GM12878 (cell line): ENCODE measurements at regions of chr12 and their contacts with region 1.

Region 1: DNA sequence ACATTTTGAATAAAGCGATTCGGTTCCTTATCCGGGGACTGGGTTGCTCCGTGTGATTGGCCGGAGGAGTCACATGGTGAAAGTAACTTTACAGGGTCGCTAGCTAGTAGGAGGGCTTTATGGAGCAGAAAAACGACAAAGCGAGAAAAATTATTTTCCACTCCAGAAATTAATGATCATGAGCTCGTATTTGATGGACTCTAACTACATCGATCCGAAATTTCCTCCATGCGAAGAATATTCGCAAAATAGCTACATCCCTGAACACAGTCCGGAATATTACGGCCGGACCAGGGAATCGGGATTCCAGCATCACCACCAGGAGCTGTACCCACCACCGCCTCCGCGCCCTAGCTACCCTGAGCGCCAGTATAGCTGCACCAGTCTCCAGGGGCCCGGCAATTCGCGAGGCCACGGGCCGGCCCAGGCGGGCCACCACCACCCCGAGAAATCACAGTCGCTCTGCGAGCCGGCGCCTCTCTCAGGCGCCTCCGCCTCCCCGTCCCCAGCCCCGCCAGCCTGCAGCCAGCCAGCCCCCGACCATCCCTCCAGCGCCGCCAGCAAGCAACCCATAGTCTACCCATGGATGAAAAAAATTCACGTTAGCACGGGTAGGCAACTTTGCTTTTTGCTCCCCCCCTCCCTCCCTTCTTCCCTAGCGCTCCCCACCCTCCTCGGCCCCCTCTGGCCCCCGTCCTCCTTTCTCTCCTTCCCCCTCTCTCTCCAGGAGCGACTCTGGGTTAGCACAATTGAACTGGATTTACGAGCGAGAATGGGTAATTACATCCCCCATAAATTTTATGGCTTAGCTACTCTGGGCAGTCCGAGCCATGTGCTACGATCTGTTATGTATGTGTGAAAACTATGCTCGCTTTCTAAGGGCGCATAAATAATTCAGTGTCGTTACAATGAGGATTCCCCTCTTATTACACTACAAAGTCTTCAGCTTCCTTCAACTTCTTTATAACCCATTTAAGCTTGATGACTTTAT is at the start of gene HOXC4:
- DNase-seq: no peak
- ATAC-seq: peak; percentile 86
- H3K4me3 ChIP-seq: peak within 1 kb of the TSS; percentile 84
- H3K27ac ChIP-seq: peak within 1 kb of the TSS; percentile 89
- H3K4me1 ChIP-seq: peaks cover 22% of the 10 kb centered on the region
- H3K27me3 ChIP-seq: no peaks in the 10 kb centered on the region
- CTCF ChIP-seq: no peak
- EP300 ChIP-seq: no peak
- POLR2A ChIP-seq: no peak; the same call in 1 of the 2 replicates
- RAD21 ChIP-seq: no peak
- polyA plus RNA-seq, gene HOXC4: 1.0 to 1.8 TPM

Region 2: DNA sequence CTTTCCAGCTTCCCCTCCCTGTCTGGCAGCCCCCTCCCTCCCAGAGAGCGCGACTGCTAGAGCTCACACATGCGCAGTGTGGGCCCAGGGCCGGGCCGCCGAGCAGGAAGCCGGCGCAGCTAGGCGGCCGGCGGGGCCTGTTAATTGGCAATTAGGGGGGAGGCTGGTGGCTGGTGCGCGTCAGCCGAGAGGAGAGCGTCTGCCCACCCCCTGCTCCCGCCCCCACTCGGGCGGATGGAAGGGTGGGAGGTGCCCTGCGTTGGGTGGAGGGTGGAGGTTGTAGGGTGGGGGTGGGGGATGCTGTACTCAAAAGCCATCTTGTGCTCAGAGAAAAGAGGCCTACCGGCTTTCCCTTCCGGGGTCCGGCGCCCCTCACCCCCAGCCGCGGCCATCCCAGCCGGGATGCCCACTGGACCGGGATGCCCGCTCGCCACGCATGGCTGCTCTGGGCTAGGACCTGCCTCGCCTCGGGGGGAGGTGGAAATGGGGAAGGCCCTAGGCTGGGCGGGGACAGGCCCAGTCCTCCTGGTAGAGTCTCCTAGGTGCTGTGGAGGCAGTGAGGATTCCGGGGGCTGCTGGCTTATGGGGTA is 36.1 kb before region 1 on chr12:
- CTCF ChIA-PET with region 1: interaction called, 15 read pairs
- POLR2A ChIA-PET with region 1: interaction called, 24 read pairs
- RAD21 ChIA-PET with region 1: interaction called, 15 read pairs
- SMC1A ChIA-PET with region 1: interaction called, 9 read pairs
- in situ Hi-C with region 1: no loop called
- intact Hi-C with region 1: loop called (anchors 1 kb)
- DNase-seq: peak; percentile 79
- ATAC-seq: peak; percentile 92
- H3K4me3 ChIP-seq: peak overlapping the region; percentile 88
- H3K27ac ChIP-seq: peak overlapping the region; percentile 80
- H3K4me1 ChIP-seq: peaks cover 21% of the 10 kb centered on the region
- H3K27me3 ChIP-seq: peaks cover 8 to 26% of the 10 kb centered on the region in 2 experiments
- CTCF ChIP-seq: no peak
- EP300 ChIP-seq: peak; percentile 36 to 45; a peak in 1 of 4 replicates
- POLR2A ChIP-seq: peak; percentile 79
- RAD21 ChIP-seq: no peak

Region 3: GRCh38 chr12:54040148-54040494 is 13.9 kb before region 1 on chr12:
- CTCF ChIA-PET with region 1: interaction called, 86 read pairs
- POLR2A ChIA-PET with region 1: interaction called, 12 read pairs
- RAD21 ChIA-PET with region 1: interaction called, 18 read pairs
- SMC1A ChIA-PET with region 1: interaction called, 9 read pairs
- in situ Hi-C with region 1: no loop called
- intact Hi-C with region 1: no loop called
- DNase-seq: no peak
- ATAC-seq: peak; percentile 41; the same call in 2 of the 3 replicates
- H3K4me3 ChIP-seq: no peak overlapping the region
- H3K27ac ChIP-seq: no peak overlapping the region
- H3K4me1 ChIP-seq: no peaks in the 10 kb centered on the region
- H3K27me3 ChIP-seq: peaks cover 1 to 7% of the 10 kb centered on the region in 2 experiments; a peak in 2 of 4 replicates
- CTCF ChIP-seq: no peak
- EP300 ChIP-seq: no peak
- POLR2A ChIP-seq: no peak
- RAD21 ChIP-seq: no peak

Region 4: GRCh38 chr12:54134850-54135249 is 80.8 kb after region 1 on chr12:
- CTCF ChIA-PET with region 1: interaction called, 6 read pairs
- POLR2A ChIA-PET with region 1: interaction called, 3 read pairs
- RAD21 ChIA-PET with region 1: interaction called, 5 read pairs
- SMC1A ChIA-PET with region 1: interaction called, 10 read pairs
- in situ Hi-C with region 1: no loop called
- intact Hi-C with region 1: no loop called
- DNase-seq: no peak
- ATAC-seq: peak; percentile 49; the same call in 2 of the 3 replicates
- H3K4me3 ChIP-seq: no peak overlapping the region
- H3K27ac ChIP-seq: no peak overlapping the region
- H3K4me1 ChIP-seq: no peaks in the 10 kb centered on the region
- H3K27me3 ChIP-seq: peaks cover 2 to 10% of the 10 kb centered on the region in 2 experiments; a peak in 3 of 4 replicates
- CTCF ChIP-seq: peak; percentile 22 to 38 (median 34); a peak in 4 of 6 replicates
- EP300 ChIP-seq: no peak
- POLR2A ChIP-seq: no peak
- RAD21 ChIP-seq: peak; percentile 42

Region 5: DNA sequence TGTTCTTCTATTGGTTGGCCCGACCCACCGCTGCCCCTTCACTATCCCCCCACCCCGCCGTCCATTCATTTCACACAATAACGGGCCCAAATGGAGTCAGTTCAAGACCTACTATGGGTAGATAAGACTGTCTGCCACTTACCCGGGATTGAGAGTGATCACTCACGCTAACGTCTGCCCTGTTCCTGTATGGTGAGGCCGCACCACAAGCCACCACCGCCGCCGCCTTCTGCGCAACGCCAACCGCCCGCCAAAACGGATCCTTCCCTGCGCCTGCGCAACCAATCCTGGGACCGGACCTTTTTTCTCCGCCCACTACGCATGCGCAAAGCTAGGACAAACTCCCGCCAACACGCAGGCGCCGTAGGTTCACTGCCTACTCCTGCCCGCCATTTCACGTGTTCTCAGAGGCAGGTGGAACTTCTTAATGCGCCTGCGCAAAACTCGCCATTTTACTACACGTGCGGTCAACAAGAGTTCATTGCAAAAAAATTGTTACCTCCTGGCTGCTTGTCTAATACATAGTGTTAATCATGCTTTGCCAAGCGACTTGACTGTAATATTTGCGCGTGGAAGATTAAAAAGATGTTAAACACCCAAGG is 225.9 kb after region 1 on chr12 and contains the start of gene CBX5:
- CTCF ChIA-PET with region 1: no interaction called
- POLR2A ChIA-PET with region 1: interaction called, 10 read pairs
- RAD21 ChIA-PET with region 1: no interaction called
- SMC1A ChIA-PET with region 1: no interaction called
- in situ Hi-C with region 1: no loop called
- intact Hi-C with region 1: no loop called
- DNase-seq: peak; percentile 98
- ATAC-seq: peak; percentile 48
- H3K4me3 ChIP-seq: peak within 1 kb of the TSS; percentile 81
- H3K27ac ChIP-seq: peak within 1 kb of the TSS; percentile 99
- H3K4me1 ChIP-seq: peaks cover 18% of the 10 kb centered on the region
- H3K27me3 ChIP-seq: no peaks in the 10 kb centered on the region
- CTCF ChIP-seq: no peak
- EP300 ChIP-seq: no peak
- POLR2A ChIP-seq: peak; percentile 83
- RAD21 ChIP-seq: no peak
- polyA plus RNA-seq, gene CBX5: 66.9 to 67.1 TPM

Region 6: GRCh38 chr12:54390668-54391551 is 336.9 kb after region 1 on chr12:
- CTCF ChIA-PET with region 1: no interaction called
- POLR2A ChIA-PET with region 1: no interaction called
- RAD21 ChIA-PET with region 1: no interaction called
- SMC1A ChIA-PET with region 1: no interaction called
- in situ Hi-C with region 1: no loop called
- intact Hi-C with region 1: no loop called
- DNase-seq: no peak
- ATAC-seq: peak; percentile 87
- H3K4me3 ChIP-seq: peak overlapping the region; percentile 82
- H3K27ac ChIP-seq: no peak overlapping the region
- H3K4me1 ChIP-seq: no peaks in the 10 kb centered on the region
- H3K27me3 ChIP-seq: no peaks in the 10 kb centered on the region
- CTCF ChIP-seq: peak; percentile 31 to 51 (median 37); a peak in 5 of 6 replicates
- EP300 ChIP-seq: no peak
- POLR2A ChIP-seq: no peak
- RAD21 ChIP-seq: no peak